Naive thymus-derived CD4-positive, alpha-beta T cell (primary cell): ENCODE measurements at regions of chr7 and their contacts with region 1.

Region 1: DNA sequence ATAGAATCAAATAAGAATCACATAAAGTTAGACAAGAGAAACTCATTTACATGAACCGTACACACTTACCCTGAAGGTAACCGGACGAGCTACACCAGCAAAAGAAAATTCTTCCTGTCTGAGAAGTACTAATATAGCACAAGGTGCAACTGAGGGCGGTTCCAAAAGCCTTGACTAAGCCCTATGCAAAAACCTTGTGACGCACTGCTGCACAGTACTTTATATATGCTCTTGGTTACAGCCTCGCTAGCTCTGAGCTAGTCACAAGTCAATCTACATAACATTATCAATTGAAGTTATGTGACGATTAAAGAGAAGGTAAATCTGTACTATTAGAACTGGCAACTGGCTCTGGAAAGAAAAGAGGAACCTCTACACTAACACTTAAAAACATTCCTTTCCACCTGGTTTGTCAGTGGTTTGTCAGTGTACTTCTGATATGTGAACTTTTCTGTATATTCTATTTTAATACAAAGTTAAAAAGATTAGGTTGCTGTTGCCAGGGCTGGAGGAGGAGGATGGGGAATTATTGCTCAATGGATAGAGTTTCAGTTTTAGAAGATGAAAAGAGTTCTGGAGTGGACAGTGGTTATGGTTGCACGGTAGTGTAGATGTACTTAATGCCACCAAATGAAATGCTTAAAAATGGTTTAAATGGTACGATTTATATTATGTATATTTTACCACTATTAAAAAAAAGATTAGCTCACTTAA is 21.6 kb downstream of the NT5C3A start:
- DNase-seq: peak in 8 of 9 donors; percentile 44 to 90 (median 78)
- ATAC-seq: peak; percentile 99
- H3K4me3 ChIP-seq: peak overlapping the region; percentile 40
- H3K4me3 Mint-ChIP-seq: peak overlapping the region; percentile 71 to 89 (median 84)
- H3K27ac ChIP-seq: peak overlapping the region; percentile 80
- H3K27ac Mint-ChIP-seq: peak overlapping the region; percentile 75 to 95 (median 90)
- H3K4me1 ChIP-seq: peaks cover 3 to 22% of the 10 kb centered on the region in 2 donors
- H3K4me1 Mint-ChIP-seq: peaks cover 18 to 72% (median 65%) of the 10 kb centered on the region in 7 donors
- H3K27me3 ChIP-seq: no peaks in the 10 kb centered on the region
- H3K27me3 Mint-ChIP-seq: no peaks in the 10 kb centered on the region

Region 2: DNA sequence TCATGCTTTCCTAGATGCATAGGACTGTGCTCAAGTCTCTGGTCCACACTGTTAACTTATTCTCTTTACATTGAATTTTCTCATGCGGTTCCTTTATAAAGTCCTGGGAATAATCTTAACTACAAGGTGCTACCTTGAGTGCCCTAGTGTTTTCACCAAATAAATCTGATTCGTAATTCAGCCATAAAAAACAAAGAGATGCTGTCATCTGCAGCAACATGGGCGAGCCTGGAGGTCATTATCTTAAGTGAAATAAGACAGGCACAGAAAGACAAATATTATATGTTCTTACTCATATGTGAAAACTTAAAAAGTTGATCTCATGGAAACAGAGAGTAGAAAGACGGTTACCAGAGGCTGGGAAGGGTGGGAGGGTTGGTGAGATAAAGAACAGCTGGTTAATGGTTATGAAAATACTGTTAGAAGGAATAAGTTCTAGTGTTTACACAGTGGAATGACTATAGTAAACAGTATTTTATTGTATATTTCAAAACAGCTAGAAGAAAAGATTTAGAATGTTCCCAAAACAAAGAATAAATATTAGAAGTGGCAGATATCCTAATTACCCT is 16.7 kb before region 1 on chr7:
- CTCF ChIA-PET with region 1: interaction called, 3 read pairs
- POLR2A ChIA-PET with region 1: interaction called, 5 read pairs
- intact Hi-C with region 1: loop called in 1 of 2 experiments (anchors 2 kb)
- DNase-seq: no peak
- ATAC-seq: no peak
- H3K4me3 ChIP-seq: no peak overlapping the region
- H3K4me3 Mint-ChIP-seq: no peak overlapping the region
- H3K27ac ChIP-seq: no peak overlapping the region
- H3K27ac Mint-ChIP-seq: peak overlapping the region in 1 of 9 donors; percentile 2
- H3K4me1 ChIP-seq: no peaks in the 10 kb centered on the region
- H3K4me1 Mint-ChIP-seq: peaks cover 0 to 6% (median 0%) of the 10 kb centered on the region in 7 donors
- H3K27me3 ChIP-seq: no peaks in the 10 kb centered on the region
- H3K27me3 Mint-ChIP-seq: no peaks in the 10 kb centered on the region